PC-9 (cell line): ENCODE measurements at regions of chr4 and their contacts with region 1.

Region 1: DNA sequence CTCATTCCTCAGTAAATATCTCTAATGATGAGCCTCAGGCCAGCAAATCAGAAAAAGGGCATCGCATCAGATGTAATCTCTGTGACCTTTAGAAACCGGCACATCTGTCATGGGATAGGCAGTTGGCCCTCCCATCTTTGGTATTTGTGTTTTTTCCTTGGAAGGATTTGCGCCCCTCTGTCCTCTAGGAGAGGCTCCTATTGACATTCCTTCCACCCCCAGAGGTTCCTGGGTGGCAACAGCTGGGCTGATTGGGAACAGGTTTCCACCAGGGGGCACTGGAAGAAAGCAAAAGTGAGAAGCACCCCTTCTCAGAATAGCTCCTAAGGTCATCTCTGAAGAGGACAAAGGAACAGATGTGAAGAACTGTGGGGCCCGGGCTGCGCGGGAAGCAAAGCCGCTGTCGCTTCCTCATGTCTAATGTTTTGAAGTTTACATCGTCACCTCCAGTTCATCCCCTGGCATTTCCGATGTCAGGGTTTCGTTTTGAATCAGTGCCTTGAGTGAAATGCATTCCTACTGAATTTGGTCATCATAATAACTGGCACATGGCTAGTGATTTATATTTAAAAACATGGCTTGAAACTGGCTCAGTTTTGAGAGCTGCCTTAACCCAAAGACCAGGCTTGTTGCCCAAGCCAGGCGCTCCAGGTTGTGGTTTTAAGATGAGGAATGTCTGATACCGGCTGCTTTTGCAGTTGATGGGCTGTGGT is 6.2 kb downstream of the TXK start:
- DNase-seq: peak; percentile 84 to 94
- H3K4me3 ChIP-seq: peak overlapping the region; percentile 40; the same call in 1 of the 2 replicates
- H3K27ac ChIP-seq: peak overlapping the region; percentile 74
- H3K4me1 ChIP-seq: peaks cover 59% of the 10 kb centered on the region
- H3K27me3 ChIP-seq: no peaks in the 10 kb centered on the region
- CTCF ChIP-seq: peak; percentile 63

Region 2: DNA sequence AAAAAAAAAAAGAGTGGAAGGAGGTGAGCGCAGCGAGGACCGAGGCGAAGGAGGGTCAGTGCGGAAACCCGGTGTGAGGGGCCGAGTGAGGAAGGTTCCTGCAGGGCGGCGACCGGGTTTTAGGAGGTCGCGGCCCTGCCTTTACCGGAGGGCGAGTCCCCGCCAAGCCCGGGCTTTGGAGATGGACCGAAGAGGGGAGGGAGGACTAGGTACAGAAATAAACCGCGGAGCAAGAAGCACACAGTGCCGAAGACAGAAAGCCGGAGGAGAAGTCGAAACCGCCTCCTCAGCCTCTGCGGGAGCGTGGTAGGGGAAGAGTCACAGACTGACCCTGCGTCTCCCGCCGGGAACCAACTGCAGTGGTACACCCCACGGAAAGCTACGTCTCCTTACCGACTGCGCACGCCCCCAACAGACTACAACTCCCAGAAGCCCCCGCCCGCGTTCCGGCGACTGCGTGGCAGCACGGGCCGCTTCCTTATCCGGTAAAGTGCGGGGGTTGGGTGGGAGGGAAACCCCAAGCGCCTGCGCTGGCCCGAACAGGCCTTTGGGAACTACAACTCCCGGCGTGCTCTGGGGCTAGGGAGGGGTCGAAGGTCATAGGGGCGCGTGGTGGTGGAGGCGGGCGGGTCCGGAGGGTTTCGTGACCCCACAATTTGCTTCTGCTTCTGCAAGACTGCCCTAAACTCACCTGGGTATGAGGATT is 213.5 kb before region 1 on chr4 and contains the start of gene NFXL1:
- CTCF ChIA-PET with region 1: no interaction called
- POLR2A ChIA-PET with region 1: interaction called, 4 read pairs
- intact Hi-C with region 1: loop called (anchors 10 kb)
- DNase-seq: peak; percentile 90 to 93
- H3K4me3 ChIP-seq: peak within 1 kb of the TSS; percentile 89
- H3K27ac ChIP-seq: peak within 1 kb of the TSS; percentile 84
- H3K4me1 ChIP-seq: peaks cover 17% of the 10 kb centered on the region
- H3K27me3 ChIP-seq: no peaks in the 10 kb centered on the region
- CTCF ChIP-seq: no peak
- total RNA-seq, gene NFXL1: 15.5 and 15.7 TPM in 2 replicates

Region 3: GRCh38 chr4:48079972-48080391 is 47.9 kb before region 1 on chr4:
- CTCF ChIA-PET with region 1: no interaction called
- POLR2A ChIA-PET with region 1: no interaction called
- intact Hi-C with region 1: loop called (anchors 1 kb)
- DNase-seq: peak; percentile 23 to 96
- H3K4me3 ChIP-seq: peak overlapping the region; percentile 43; the same call in 1 of the 2 replicates
- H3K27ac ChIP-seq: peak overlapping the region; percentile 86
- H3K4me1 ChIP-seq: peaks cover 58% of the 10 kb centered on the region
- H3K27me3 ChIP-seq: no peaks in the 10 kb centered on the region
- CTCF ChIP-seq: no peak

Region 4: GRCh38 chr4:48269861-48270522 is 142.2 kb after region 1 on chr4:
- CTCF ChIA-PET with region 1: no interaction called
- POLR2A ChIA-PET with region 1: no interaction called
- intact Hi-C with region 1: loop called (anchors 1 kb)
- DNase-seq: peak; percentile 85 to 94
- H3K4me3 ChIP-seq: peak overlapping the region; percentile 58
- H3K27ac ChIP-seq: peak overlapping the region; percentile 97
- H3K4me1 ChIP-seq: peaks cover 23% of the 10 kb centered on the region
- H3K27me3 ChIP-seq: no peaks in the 10 kb centered on the region
- CTCF ChIP-seq: peak; percentile 39; the same call in 1 of the 2 replicates

Region 5: GRCh38 chr4:48546336-48546735 is 418.5 kb after region 1 on chr4:
- CTCF ChIA-PET with region 1: no interaction called
- POLR2A ChIA-PET with region 1: no interaction called
- intact Hi-C with region 1: loop called (anchors 5 kb)
- DNase-seq: peak in 1 of 2 experiments; percentile 15
- H3K4me3 ChIP-seq: no peak overlapping the region
- H3K27ac ChIP-seq: no peak overlapping the region
- H3K4me1 ChIP-seq: no peaks in the 10 kb centered on the region
- H3K27me3 ChIP-seq: no peaks in the 10 kb centered on the region
- CTCF ChIP-seq: peak; percentile 78

Region 6: GRCh38 chr4:48963042-48963679 is 835.3 kb after region 1 on chr4:
- CTCF ChIA-PET with region 1: no interaction called
- POLR2A ChIA-PET with region 1: no interaction called
- intact Hi-C with region 1: loop called (anchors 5 kb)
- DNase-seq: peak; percentile 63 to 67
- H3K4me3 ChIP-seq: no peak overlapping the region
- H3K27ac ChIP-seq: no peak overlapping the region
- H3K4me1 ChIP-seq: peaks cover 21% of the 10 kb centered on the region
- H3K27me3 ChIP-seq: no peaks in the 10 kb centered on the region
- CTCF ChIP-seq: peak; percentile 97